Natural killer cell (primary cell): ENCODE measurements at regions of chr12 and their contacts with region 1.

Region 1: GRCh38 chr12:80186727-80187217 is 87.4 kb downstream of the OTOGL start:
- DNase-seq: peak in 1 of 2 donors; percentile 66
- ATAC-seq: peak; percentile 73 to 81 (median 80)
- H3K4me3 ChIP-seq: no peak overlapping the region
- H3K4me3 Mint-ChIP-seq: no peak overlapping the region
- H3K27ac ChIP-seq: peak overlapping the region; percentile 31
- H3K27ac Mint-ChIP-seq: no peak overlapping the region
- H3K4me1 ChIP-seq: peaks cover 15% of the 10 kb centered on the region
- H3K4me1 Mint-ChIP-seq: peaks cover 6 to 11% of the 10 kb centered on the region in 2 donors
- H3K27me3 ChIP-seq: no peaks in the 10 kb centered on the region
- H3K27me3 Mint-ChIP-seq: no peaks in the 10 kb centered on the region
- CTCF ChIP-seq: peak; percentile 64

Region 2: GRCh38 chr12:79547735-79548609 is 638.8 kb before region 1 on chr12:
- intact Hi-C with region 1: loop called (anchors 10 kb)
- DNase-seq: peak in 1 of 2 donors; percentile 36
- ATAC-seq: no peak
- H3K4me3 ChIP-seq: no peak overlapping the region
- H3K4me3 Mint-ChIP-seq: no peak overlapping the region
- H3K27ac ChIP-seq: no peak overlapping the region
- H3K27ac Mint-ChIP-seq: no peak overlapping the region
- H3K4me1 ChIP-seq: no peaks in the 10 kb centered on the region
- H3K4me1 Mint-ChIP-seq: no peaks in the 10 kb centered on the region
- H3K27me3 ChIP-seq: no peaks in the 10 kb centered on the region
- H3K27me3 Mint-ChIP-seq: peaks cover 0 to 2% of the 10 kb centered on the region in 2 donors
- CTCF ChIP-seq: peak; percentile 50

Region 3: DNA sequence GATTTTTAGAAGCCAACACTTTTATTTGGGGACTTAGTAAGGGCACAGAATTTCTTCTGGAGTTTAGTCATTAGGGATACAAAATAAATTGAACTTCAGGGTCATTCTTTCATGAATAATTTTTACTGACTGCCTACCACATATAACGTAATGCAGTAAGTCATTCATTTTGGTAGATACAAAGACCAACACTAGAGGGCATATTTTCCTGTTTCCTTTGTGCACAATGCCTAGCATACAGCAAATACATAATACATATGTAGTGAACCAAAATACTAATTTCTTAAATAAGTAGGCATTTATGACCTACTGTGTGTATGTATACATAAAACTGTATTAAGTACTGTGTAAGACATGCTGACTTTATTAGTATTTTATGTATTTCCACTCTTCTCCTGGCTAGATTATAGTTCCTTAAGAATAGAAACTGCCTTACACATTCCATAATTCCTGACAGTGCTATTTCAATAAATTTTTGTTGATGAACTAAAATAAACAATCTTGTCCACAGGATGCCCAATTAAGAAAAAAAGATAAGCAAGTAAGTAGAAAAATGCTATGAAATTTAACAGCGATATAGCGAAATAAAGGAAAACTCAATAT is 299.8 kb before region 1 on chr12:
- intact Hi-C with region 1: loop called (anchors 1 kb)
- DNase-seq: peak in 1 of 2 donors; percentile 70
- ATAC-seq: peak; percentile 85 to 95 (median 89)
- H3K4me3 ChIP-seq: no peak overlapping the region
- H3K4me3 Mint-ChIP-seq: no peak overlapping the region
- H3K27ac ChIP-seq: no peak overlapping the region
- H3K27ac Mint-ChIP-seq: peak overlapping the region in 1 of 2 donors; percentile 24
- H3K4me1 ChIP-seq: peaks cover 5% of the 10 kb centered on the region
- H3K4me1 Mint-ChIP-seq: peaks cover 73 to 74% of the 10 kb centered on the region in 2 donors
- H3K27me3 ChIP-seq: no peaks in the 10 kb centered on the region
- H3K27me3 Mint-ChIP-seq: no peaks in the 10 kb centered on the region
- CTCF ChIP-seq: peak; percentile 78

Region 4: DNA sequence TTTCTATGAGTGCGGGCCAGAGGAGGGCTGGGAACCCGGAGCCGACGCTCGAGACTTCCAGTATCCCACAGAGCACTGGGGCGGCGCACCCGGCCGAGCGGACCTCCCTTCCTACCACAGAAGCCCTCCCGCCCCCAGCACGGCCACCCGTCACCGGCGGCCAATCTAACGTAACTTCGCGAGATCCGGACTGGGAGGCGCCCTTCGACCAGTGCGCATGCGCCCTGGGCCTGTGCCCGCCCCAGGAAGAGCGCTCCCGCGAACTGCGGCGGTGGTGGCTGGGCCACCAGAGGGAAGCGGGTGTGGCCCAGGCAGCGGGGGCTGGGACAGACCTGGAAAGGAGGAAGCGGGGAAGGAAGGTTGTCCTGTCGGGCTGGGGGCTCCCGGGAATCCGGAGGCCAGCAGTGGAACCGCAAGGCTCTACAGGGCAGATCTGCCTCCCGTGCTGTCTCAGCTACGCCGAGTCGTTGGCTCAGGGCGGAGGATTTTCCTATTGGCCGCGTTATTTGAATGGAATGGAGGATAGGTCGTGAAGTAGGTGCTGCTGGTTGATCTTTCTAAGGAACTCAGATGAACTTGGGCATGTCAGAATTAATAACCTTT is 251.7 kb before region 1 on chr12 and contains the start of gene PPP1R12A:
- intact Hi-C with region 1: loop called (anchors 2 kb)
- DNase-seq: peak; percentile 93 to 98
- ATAC-seq: peak; percentile 82 to 93 (median 88)
- H3K4me3 ChIP-seq: peak within 1 kb of the TSS; percentile 100
- H3K4me3 Mint-ChIP-seq: peak within 1 kb of the TSS; percentile 86
- H3K27ac ChIP-seq: peak within 1 kb of the TSS; percentile 99
- H3K27ac Mint-ChIP-seq: peak within 1 kb of the TSS; percentile 86 to 100
- H3K4me1 ChIP-seq: peaks cover 3% of the 10 kb centered on the region
- H3K4me1 Mint-ChIP-seq: peaks cover 42 to 49% of the 10 kb centered on the region in 2 donors
- H3K27me3 ChIP-seq: no peaks in the 10 kb centered on the region
- H3K27me3 Mint-ChIP-seq: no peaks in the 10 kb centered on the region
- CTCF ChIP-seq: no peak
- total RNA-seq, gene PPP1R12A: 145 to 192 (median 185) TPM

Region 5: DNA sequence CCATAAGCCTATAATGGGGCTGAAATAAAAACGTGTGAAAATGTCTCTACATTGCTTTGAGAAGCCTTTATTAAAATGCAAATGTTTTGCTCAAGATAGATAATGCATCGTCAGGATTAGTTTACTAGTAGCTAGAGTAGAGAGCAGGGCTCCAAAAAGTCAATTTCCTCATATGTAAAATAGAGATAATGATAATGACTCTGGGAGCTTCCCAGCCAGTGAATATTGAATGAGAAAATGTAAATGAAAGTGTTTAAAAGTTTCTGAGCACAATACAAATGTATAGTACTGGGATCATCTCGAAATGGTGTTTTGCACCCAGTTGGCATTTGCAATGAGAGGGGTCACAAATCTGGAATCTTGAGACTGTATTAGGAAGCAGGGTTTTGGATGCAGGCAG is 47.9 kb after region 1 on chr12:
- intact Hi-C with region 1: no loop called
- DNase-seq: no peak
- ATAC-seq: no peak
- H3K4me3 ChIP-seq: no peak overlapping the region
- H3K4me3 Mint-ChIP-seq: no peak overlapping the region
- H3K27ac ChIP-seq: no peak overlapping the region
- H3K27ac Mint-ChIP-seq: no peak overlapping the region
- H3K4me1 ChIP-seq: no peaks in the 10 kb centered on the region
- H3K4me1 Mint-ChIP-seq: no peaks in the 10 kb centered on the region
- H3K27me3 ChIP-seq: peaks cover 2% of the 10 kb centered on the region
- H3K27me3 Mint-ChIP-seq: peaks cover 3 to 6% of the 10 kb centered on the region in 2 donors
- CTCF ChIP-seq: no peak

Region 6: DNA sequence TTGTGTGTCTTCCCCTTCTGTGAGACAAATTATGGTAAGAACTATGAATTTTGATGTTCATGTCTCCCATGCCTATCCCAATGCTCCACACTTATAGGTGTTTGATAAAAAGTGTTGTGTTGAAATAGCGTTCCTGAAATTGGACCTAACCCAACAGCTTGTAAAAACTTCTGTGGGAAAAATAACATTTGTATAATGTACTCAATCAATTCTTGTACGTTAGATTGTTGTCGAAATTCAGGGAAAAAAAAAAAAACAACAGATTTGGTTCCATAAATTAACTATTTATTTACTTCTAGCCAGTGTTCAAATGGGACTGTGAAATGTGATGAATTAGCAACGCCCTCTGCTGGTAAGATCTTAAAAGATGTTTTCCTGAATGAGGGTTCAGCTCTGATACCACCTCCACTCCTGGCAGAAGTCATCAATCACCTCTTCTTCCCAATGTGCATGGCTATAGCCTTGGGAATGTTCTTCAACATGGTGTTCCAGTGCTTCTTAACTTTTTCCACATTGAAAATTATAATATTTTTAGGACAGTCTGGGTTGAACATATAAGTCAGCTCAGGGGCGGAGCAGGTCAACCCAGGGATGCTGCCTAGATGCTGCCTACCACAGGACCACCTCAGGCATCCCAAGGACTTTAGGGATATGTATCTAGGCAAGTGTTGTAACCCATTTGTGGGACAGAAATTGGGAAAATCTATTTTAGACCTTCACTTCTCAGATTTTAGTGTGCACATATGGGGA is 83.2 kb after region 1 on chr12:
- intact Hi-C with region 1: loop called (anchors 5 kb)
- DNase-seq: peak in 1 of 2 donors; percentile 43
- ATAC-seq: peak in 1 of 3 donors; percentile 57
- H3K4me3 ChIP-seq: no peak overlapping the region
- H3K4me3 Mint-ChIP-seq: no peak overlapping the region
- H3K27ac ChIP-seq: no peak overlapping the region
- H3K27ac Mint-ChIP-seq: no peak overlapping the region
- H3K4me1 ChIP-seq: peaks cover 2% of the 10 kb centered on the region
- H3K4me1 Mint-ChIP-seq: peaks cover 16% of the 10 kb centered on the region in 2 donors
- H3K27me3 ChIP-seq: no peaks in the 10 kb centered on the region
- H3K27me3 Mint-ChIP-seq: peaks cover 0 to 3% of the 10 kb centered on the region in 2 donors
- CTCF ChIP-seq: peak; percentile 80